ENCODE measurements at regions of chr17 and their contacts with region 1.

Region 1: DNA sequence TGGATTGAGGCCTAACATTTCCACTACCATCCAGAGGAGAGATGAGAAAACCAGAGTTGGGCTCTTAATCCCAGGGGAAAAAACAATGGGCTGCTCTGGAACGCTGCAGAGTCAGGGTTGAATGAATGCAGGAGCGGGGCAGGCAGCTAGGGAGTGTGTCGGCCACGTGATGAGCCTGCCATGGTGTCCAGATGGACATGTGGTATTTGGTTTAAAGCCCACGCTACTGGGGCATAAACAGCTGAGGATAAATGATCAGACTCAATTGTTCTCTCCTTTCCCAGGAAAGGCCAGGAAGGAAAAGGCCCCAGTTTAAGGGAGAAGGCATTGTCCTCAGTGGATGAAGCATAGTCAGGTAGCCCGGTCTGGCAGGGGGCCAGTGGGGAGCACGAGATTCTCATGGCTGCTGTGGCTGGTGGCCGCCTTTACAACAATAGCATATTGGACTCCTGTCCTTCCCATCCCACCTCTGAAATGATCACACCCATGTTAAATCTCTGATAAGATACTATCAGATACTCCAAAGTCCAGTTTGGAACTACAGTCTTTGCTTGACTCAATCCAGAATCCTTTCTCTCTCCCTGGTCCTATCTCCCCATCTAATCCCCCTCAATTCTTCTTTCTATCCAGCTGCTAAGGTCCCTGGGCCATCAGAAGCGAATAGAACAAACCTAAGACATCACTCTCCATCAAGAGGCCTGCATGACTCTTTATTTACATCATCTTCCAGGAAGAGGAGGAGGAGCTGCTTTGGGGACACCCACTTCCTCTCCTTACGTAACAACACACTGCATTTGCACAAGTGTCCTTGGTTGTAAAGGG is 20.4 kb downstream of the CA4 start:
- DNase-seq: peak; percentile 77
- ATAC-seq: peak; percentile 41

Region 2: DNA sequence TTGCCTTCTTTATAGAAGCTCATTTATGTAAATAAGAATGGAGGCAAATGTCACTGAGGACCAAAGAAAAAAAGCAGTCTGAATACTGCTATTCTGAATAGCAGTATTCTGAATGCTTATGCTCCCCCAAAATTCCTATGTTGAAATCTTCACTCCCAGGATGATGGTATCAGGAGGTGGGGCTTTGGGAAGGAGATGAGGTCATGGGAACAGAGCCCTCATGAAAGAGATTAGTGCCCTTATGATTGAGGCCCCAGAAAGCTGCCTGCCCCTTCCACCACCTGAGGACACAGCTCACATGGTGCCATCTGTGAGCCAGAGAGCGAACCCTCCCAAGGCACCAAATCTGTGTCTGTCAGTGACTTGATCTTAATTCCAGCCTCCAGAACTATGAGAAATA is 120.2 kb before region 1 on chr17:
- intact Hi-C with region 1: no loop called
- DNase-seq: no peak
- ATAC-seq: no peak

Region 3: GRCh38 chr17:60065136-60065535 is 105.0 kb before region 1 on chr17:
- intact Hi-C with region 1: no loop called
- DNase-seq: no peak
- ATAC-seq: no peak

Region 4: GRCh38 chr17:60142872-60143499 is 27.1 kb before region 1 on chr17:
- intact Hi-C with region 1: loop called (anchors 2 kb)
- DNase-seq: peak; percentile 88
- ATAC-seq: peak; percentile 59